ENCODE measurements at regions of chr7 and their contacts with region 1.

Region 1: GRCh38 chr7:2886900-2887299 is 42.8 kb upstream of the GNA12 start:
- DNase-seq: peak; percentile 85
- CTCF ChIP-seq: peak; percentile 80

Region 2: DNA sequence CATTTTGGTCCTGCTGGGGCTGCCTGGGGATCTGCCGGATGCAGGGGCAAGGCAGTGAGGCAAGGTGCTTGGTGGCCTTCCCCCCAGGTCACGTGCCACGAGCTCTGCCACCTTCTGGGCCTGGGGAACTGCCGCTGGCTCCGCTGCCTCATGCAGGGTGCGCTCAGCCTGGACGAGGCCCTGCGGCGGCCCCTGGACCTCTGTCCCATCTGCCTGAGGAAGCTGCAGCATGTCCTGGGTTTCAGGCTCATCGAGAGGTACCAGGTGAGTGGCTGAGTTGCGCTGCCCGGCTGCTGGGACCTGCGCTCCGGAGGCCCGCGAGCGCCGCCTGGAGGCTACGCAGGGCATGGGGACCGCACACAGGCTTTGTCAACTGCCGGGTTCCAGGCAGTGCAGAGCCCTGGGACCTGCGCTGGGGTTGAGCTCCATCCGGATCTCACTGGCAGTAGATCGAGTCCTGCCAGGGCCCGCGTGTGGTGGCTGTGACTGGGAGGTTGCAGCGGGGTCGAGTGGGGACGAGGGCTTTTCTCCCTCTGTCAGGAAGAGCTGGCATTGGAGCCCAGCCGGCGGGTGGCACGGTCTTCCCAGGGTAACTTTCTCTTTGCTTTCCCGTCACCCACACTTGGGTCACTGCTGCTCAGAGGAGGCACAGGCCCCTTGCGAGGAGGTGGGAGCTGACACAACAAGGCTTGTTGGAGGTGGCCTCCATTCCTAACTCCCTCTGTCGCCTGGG is 177.2 kb before region 1 on chr7:
- in situ Hi-C with region 1: no loop called
- DNase-seq: peak; percentile 91
- CTCF ChIP-seq: peak; percentile 99

Region 3: DNA sequence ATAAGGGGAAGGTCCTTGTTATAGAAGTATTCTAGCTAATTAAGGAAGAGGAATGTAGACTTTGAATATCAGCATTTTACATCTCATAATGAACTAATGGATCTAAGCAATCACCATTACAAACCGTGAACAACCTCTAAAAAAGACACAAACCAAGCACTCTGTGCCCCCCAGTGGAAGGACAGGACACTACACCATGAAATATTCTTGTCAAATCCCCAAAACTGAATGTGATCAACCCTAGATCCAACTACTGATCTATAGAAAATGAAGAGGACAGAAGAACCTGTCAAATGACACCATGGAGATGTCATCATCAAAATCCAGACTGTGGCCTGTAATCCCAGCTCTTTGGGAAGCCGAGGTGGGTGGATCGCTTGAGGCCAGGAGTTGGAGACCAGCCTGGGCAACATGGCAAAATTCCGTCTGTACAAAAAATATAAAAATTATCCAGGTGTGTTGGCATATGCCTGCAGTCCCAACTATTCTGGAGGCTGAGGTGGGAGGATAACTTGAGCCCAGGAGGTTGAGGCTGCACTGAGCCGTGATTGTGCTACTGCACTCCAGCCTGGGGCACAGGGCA is 268.1 kb after region 1 on chr7:
- in situ Hi-C with region 1: loop called (anchors 10 kb)
- DNase-seq: peak; percentile 74
- CTCF ChIP-seq: peak; percentile 62

Region 4: GRCh38 chr7:3922175-3922635 is 1035.3 kb after region 1 on chr7:
- in situ Hi-C with region 1: loop called (anchors 25 kb)
- DNase-seq: no peak
- CTCF ChIP-seq: no peak

Measured in GM13976 (cell line).